ENCODE measurements at regions of chr2 and their contacts with region 1.

Region 1: DNA sequence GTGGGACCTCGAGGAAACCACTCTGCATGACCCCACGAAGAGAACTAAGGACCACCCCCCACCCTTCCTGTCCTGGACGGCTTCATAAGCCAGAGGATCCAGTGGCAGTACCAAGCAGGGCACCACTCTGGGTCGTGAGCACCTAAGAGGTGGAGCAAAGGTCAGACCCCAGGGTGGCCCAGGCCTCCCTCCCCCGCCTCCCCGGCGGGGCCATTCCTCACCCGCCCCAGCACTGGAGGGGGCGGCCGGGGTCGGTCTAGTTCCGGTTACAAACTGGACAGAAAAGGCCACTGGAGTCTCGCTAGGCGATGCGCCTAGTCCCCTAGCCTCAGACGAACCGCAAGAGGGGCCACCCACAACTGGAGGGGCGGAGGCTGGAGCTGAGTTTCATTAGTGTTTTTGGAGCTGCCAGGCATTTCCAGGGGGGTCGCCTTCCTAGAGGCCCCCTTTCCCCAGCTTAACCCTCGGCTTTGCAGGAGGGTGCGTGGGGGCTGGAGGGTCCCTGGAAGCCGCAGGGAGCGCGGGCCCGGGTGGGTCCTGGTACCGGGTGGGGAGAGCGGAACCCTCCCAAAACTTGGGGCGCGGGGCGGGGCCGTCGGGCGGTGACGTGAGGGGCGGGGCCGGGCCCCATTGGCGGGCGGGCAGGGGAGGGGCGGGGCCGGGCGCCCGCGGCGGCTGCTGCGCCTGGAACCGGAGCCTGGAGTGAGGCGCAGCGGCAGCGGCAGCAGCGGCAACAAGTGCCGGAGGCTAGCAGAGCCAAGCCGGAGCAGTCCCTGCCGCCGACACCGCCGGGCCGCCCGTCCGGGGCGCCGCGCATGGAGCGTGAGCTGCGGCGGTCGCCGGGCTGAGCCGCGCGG is at the start of gene B3GNT2:
- DNase-seq: peak; percentile 92
- ATAC-seq: peak; percentile 62
- H3K4me3 Mint-ChIP-seq: peak within 1 kb of the TSS; percentile 87
- H3K27ac Mint-ChIP-seq: peak within 1 kb of the TSS; percentile 95
- H3K4me1 Mint-ChIP-seq: peaks cover 36% of the 10 kb centered on the region
- H3K27me3 Mint-ChIP-seq: no peaks in the 10 kb centered on the region
- total RNA-seq, gene B3GNT2: 45.5 to 46.0 TPM

Region 2: DNA sequence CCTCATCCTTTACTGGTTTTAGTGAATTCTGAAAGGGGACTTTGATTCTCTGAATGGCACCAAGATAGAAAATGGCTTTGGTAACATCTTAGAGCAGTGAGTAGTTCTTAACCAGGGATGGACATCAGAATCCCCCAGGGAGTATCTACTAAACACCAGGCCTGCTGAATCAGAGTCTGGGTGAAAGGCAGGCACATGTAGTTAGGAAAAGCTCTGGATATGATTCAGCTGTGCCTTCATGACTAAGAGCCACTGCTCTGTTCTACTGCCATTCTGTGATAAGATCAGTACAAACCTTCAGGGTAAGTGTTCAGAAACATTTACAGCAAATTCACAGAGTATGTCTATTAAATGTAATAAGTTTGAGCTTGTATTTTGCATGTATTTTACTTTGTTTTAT is 45.9 kb before region 1 on chr2:
- POLR2A ChIA-PET with region 1: no interaction called
- DNase-seq: no peak
- ATAC-seq: no peak
- H3K4me3 Mint-ChIP-seq: no peak overlapping the region
- H3K27ac Mint-ChIP-seq: no peak overlapping the region
- H3K4me1 Mint-ChIP-seq: peaks cover 30% of the 10 kb centered on the region
- H3K27me3 Mint-ChIP-seq: no peaks in the 10 kb centered on the region

Region 3: DNA sequence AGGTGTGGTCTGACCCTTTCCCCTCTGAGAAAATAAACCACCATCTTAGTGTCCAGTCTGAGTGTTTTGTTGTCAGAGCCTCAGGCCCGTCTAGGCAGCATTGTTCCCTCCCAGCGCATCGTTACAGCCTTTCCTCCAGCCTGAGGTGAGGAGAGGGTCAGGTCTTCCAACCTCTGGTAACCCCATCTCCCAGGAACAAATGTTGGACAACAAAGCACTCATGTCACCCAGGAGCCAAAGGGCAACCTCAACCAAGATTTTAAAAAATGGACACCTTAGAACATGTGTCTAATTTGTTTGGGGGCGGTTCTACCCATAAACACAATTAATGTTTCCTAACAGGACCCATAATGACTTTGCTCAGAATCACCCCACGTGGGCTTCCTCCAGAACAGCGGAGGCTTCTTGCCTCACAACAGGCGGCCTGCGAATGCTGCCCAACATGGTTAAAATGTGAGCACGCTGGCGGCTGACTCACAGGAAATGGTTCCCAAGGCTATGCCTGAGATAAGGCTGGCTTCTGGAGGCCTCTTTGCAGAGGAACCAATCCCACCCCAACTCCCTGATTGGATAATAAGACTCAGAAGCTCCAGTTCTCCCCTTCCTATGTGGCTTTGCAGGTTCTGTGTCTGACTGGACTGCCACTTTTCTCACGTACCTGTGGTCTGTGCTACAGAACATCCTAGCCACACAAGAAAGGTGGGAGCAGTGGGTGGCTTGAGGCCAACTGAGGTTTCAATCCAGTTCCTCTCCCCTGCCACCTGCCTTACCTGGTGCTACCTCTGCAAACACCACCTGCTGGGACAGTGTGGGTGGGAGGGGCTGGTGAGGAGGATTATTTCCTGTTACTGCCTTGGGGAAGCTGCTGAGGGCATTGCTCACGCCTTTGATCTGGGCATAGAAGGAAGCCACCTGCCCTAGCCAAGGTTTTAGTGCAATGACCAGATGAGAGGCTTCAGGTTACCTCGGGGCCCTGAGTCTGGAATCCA is 109.1 kb after region 1 on chr2:
- POLR2A ChIA-PET with region 1: interaction called, 19 read pairs
- DNase-seq: peak; percentile 63
- ATAC-seq: peak; percentile 60
- H3K4me3 Mint-ChIP-seq: peak overlapping the region; percentile 80
- H3K27ac Mint-ChIP-seq: peak overlapping the region; percentile 99
- H3K4me1 Mint-ChIP-seq: peaks cover 78% of the 10 kb centered on the region
- H3K27me3 Mint-ChIP-seq: no peaks in the 10 kb centered on the region

Measured in activated naive CD8-positive, alpha-beta T cell treated with anti-CD3 and anti-CD28 coated beads, Interleukin-2, amount 10 ng/mL, durations not matched to agents 7 days and 5 days (primary cell).